Lower leg skin (tissue), 4 donors: ENCODE measurements at regions of chr11 and their contacts with region 1.

Region 1: DNA sequence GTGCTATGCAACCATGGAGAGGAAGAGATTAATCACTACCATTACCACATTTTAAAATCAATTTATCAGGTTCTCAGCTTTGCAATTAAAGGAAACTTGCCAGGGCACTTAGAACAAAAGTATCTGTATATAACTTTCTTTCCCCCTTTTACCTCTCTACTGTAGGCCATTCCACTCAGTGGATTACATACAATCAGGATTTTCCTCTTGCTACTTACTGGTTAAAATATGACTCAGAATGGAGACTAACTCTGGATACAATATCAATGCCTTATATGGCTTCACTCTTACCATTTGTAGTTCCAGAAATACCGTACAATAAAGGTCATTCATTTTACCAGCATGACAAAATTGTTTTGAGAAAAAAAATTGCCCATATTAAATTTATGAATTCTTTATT is 706.9 kb downstream of the KCNA4 start:
- DNase-seq: no peak
- H3K4me3 ChIP-seq: no peak overlapping the region
- CTCF ChIP-seq: no peak
- POLR2A ChIP-seq: no peak

Region 2: DNA sequence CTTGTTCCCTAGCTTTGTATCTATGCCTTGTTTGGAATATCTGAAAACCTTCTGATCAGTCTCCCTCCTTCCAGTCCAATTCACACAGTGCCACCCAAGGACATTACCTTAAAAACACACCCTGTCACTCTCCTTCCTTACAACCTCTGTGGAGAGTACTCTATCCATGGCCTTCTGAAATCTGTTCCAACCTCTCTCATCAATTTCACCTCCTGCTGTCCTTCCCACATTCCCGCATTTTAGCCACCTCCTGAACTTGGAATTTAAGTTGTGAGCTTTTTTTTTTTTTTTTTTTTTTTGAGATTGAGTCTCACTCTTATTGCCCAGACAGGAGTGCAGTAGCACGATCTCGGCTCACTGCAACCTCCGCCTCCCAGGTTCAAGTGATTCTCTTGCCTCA is 377.0 kb before region 1 on chr11:
- intact Hi-C with region 1: loop called (anchors 5 kb)
- DNase-seq: no peak
- H3K4me3 ChIP-seq: no peak overlapping the region
- CTCF ChIP-seq: no peak
- POLR2A ChIP-seq: no peak

Region 3: GRCh38 chr11:29279716-29280115 is 30.3 kb before region 1 on chr11:
- intact Hi-C with region 1: loop called (anchors 2 kb)
- DNase-seq: no peak
- H3K4me3 ChIP-seq: no peak overlapping the region
- CTCF ChIP-seq: no peak
- POLR2A ChIP-seq: no peak

Region 4: DNA sequence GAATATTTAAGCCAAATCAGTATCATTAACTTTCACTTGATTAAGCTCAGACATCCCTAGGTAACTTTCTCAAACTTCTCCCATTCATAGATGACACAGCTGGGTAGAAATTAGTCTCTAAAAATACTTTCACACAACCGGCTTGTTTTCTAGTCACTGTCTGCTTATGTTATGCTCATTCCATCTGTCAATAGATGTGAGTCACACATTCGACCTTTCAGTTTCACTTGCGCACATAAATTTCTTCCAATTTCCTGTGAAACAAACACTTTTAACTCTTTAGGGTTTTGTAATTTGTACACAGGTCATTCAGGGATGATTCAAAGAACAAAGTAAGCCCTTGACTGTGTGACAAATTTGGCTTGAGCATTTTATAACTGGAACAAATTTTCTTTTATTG is 16.2 kb before region 1 on chr11:
- intact Hi-C with region 1: no loop called
- DNase-seq: no peak
- H3K4me3 ChIP-seq: no peak overlapping the region
- CTCF ChIP-seq: no peak
- POLR2A ChIP-seq: no peak